ENCODE measurements at regions of chrX and their contacts with region 1.

Region 1: DNA sequence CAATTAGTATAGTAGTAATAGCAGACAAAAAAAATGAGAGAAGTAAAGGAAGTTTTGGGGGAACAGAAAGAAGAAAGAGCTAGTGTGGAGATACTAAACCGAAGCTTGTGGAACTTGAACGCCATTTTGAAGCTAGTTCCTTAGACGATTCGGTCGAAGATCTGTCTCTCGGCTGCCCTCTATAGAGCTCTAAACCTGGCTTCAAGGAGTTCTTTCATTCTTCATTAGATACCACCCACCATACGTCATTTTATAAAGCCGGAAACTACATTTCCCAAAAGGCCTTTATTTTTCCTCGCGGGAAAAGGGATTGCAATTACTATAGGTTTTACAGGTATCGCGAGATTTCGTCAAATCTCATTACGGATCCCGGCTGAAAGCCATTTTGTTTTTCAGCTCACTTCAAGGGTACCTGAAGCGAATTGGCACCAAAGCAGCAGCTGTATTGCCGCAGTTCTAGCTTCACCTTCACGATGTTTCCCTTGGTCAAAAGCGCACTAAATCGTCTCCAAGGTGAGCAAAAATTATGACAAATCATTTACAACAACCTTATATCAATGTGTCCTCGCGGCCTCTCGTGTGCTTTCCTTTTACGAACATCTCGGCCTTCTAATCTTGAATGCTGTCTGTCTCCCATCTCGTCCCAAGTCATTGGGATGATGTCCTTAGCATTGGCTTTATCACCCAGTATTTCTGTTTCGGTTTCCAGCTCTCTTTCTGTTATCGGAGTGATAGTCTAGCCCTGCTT is at the start of gene COX7B:
- DNase-seq: peak; percentile 57

Region 2: GRCh38 chrX:77910108-77910840 is 11.0 kb after region 1 on chrX and contains the start of gene ATP7A:
- CTCF ChIA-PET with region 1: interaction called, 4 read pairs
- POLR2A ChIA-PET with region 1: interaction called, 23 read pairs
- DNase-seq: peak; percentile 88